Calu3 (cell line): ENCODE measurements at regions of chr15 and their contacts with region 1.

Region 1: GRCh38 chr15:99454941-99455788 is 110.6 kb upstream of the MEF2A start:
- DNase-seq: peak; percentile 86
- H3K4me3 Mint-ChIP-seq: peak overlapping the region; percentile 54
- H3K27ac Mint-ChIP-seq: peak overlapping the region; percentile 75
- H3K4me1 Mint-ChIP-seq: peaks cover 52% of the 10 kb centered on the region
- H3K27me3 Mint-ChIP-seq: no peaks in the 10 kb centered on the region
- CTCF ChIP-seq: no peak

Region 2: GRCh38 chr15:99433034-99433756 is 22.0 kb before region 1 on chr15:
- CTCF ChIA-PET with region 1: interaction called, 10 read pairs
- intact Hi-C with region 1: no loop called
- DNase-seq: peak; percentile 48
- H3K4me3 Mint-ChIP-seq: no peak overlapping the region
- H3K27ac Mint-ChIP-seq: no peak overlapping the region
- H3K4me1 Mint-ChIP-seq: peaks cover 27% of the 10 kb centered on the region
- H3K27me3 Mint-ChIP-seq: no peaks in the 10 kb centered on the region
- CTCF ChIP-seq: no peak